H1 (cell line): ENCODE measurements at regions of chr10 and their contacts with region 1.

Region 1: DNA sequence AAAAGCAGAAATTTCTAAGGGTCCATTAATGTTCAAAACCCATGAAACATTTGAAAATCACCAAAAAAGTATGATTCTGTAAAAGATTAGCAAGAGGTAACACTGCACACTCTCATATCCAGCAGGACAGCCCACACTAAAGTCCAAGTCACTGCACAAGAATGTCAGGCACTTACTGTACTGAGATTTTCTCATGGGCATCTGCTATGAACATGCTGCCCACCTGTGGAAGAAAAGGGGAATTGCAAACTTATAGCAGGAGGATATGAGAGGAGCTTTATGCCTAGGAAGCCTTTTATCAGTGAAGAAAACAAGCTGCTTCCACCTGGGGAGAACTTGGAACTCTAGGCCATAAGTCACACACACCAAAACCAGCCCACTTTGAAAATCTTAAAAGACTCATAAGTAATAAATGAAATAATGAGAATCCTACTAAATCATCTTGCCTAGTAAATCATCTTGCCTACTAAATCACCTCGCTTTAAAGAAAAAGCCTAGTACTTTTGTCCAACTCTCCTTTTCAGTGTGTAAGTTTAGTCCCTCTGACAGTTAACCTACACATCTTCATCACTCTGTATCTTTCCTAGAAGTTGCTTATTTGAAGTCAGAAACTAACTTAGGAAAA is 46.1 kb downstream of the ARMH3 start:
- DNase-seq: peak in 1 of 2 experiments; percentile 17
- H3K4me3 ChIP-seq: no peak overlapping the region
- H3K27ac ChIP-seq: no peak overlapping the region
- H3K4me1 ChIP-seq: peaks cover 0 to 5% (median 2%) of the 10 kb centered on the region in 4 experiments; a peak in 3 of 7 replicates
- H3K27me3 ChIP-seq: no peaks in the 10 kb centered on the region
- CTCF ChIP-seq: peak in 2 of 3 experiments; percentile 95 to 99; a peak in 3 of 4 replicates
- EP300 ChIP-seq: no peak
- POLR2A ChIP-seq: no peak
- RAD21 ChIP-seq: peak; percentile 99

Region 2: DNA sequence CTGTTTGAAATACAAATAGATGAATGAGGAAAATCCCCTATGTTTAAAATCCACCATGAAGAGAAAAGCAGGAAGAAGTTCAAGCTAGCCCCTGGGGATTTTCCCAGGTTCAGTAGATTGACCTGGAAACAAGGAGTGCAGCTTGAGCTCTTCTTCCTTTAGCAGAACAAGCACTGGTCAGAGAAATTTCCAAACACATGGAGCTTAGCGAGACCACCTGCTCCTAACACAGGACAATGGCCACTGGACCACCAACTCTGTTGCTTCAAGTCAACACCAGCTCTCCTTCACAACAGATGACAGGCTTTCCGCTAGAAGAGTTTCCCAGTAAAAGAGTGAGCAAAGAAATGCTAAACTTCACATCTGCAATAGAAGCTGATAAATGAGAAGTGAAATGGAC is 305.6 kb before region 1 on chr10:
- CTCF ChIA-PET with region 1: no interaction called
- POLR2A ChIA-PET with region 1: no interaction called
- DNase-seq: no peak
- H3K4me3 ChIP-seq: no peak overlapping the region
- H3K27ac ChIP-seq: no peak overlapping the region
- H3K4me1 ChIP-seq: no peaks in the 10 kb centered on the region
- H3K27me3 ChIP-seq: no peaks in the 10 kb centered on the region
- CTCF ChIP-seq: no peak
- EP300 ChIP-seq: no peak
- POLR2A ChIP-seq: no peak
- RAD21 ChIP-seq: no peak

Region 3: GRCh38 chr10:101830322-101831168 is 179.4 kb before region 1 on chr10:
- CTCF ChIA-PET with region 1: interaction called, 18 read pairs
- POLR2A ChIA-PET with region 1: no interaction called
- DNase-seq: peak in 1 of 2 experiments; percentile 90
- H3K4me3 ChIP-seq: peak overlapping the region; percentile 44 to 66 (median 48)
- H3K27ac ChIP-seq: no peak overlapping the region
- H3K4me1 ChIP-seq: peaks cover 9 to 22% (median 17%) of the 10 kb centered on the region in 4 experiments
- H3K27me3 ChIP-seq: no peaks in the 10 kb centered on the region
- CTCF ChIP-seq: no peak
- EP300 ChIP-seq: no peak
- POLR2A ChIP-seq: no peak
- RAD21 ChIP-seq: no peak

Region 4: DNA sequence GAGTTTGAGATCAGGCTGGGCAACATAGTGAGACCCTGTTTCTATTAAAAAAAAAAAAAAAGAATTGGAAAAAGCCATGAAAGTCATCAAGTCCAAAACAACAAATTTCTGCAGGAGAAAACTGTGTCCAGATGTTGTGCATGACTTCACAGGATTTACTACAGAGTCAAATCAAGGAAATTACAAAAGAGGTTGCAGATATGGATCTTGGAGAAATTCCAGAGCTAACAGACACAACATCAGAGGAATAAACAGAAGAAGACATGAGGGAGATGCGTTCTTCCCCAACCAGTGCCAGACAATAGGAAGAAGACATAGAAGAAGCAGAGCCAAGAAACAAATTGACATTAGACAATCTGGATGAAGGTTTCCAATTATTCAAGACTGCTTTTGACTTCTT is 142.0 kb before region 1 on chr10:
- CTCF ChIA-PET with region 1: interaction called, 11 read pairs
- POLR2A ChIA-PET with region 1: no interaction called
- DNase-seq: no peak
- H3K4me3 ChIP-seq: no peak overlapping the region
- H3K27ac ChIP-seq: no peak overlapping the region
- H3K4me1 ChIP-seq: no peaks in the 10 kb centered on the region
- H3K27me3 ChIP-seq: no peaks in the 10 kb centered on the region
- CTCF ChIP-seq: no peak
- EP300 ChIP-seq: no peak
- POLR2A ChIP-seq: no peak
- RAD21 ChIP-seq: no peak

Region 5: GRCh38 chr10:101903827-101904550 is 105.9 kb before region 1 on chr10:
- CTCF ChIA-PET with region 1: interaction called, 20 read pairs
- POLR2A ChIA-PET with region 1: no interaction called
- DNase-seq: no peak
- H3K4me3 ChIP-seq: no peak overlapping the region
- H3K27ac ChIP-seq: no peak overlapping the region
- H3K4me1 ChIP-seq: peaks cover 6 to 28% (median 18%) of the 10 kb centered on the region in 4 experiments; a peak in 6 of 7 replicates
- H3K27me3 ChIP-seq: no peaks in the 10 kb centered on the region; a peak in 1 of 7 replicates
- CTCF ChIP-seq: no peak
- EP300 ChIP-seq: no peak
- POLR2A ChIP-seq: no peak
- RAD21 ChIP-seq: no peak

Region 6: GRCh38 chr10:101950213-101950612 is 59.7 kb before region 1 on chr10:
- CTCF ChIA-PET with region 1: no interaction called
- POLR2A ChIA-PET with region 1: no interaction called
- DNase-seq: no peak
- H3K4me3 ChIP-seq: no peak overlapping the region
- H3K27ac ChIP-seq: no peak overlapping the region
- H3K4me1 ChIP-seq: no peaks in the 10 kb centered on the region
- H3K27me3 ChIP-seq: no peaks in the 10 kb centered on the region
- CTCF ChIP-seq: no peak
- EP300 ChIP-seq: no peak
- POLR2A ChIP-seq: no peak
- RAD21 ChIP-seq: no peak

Region 7: GRCh38 chr10:102024799-102025198 is 14.9 kb after region 1 on chr10:
- CTCF ChIA-PET with region 1: interaction called, 38 read pairs
- POLR2A ChIA-PET with region 1: no interaction called
- DNase-seq: no peak
- H3K4me3 ChIP-seq: no peak overlapping the region
- H3K27ac ChIP-seq: no peak overlapping the region
- H3K4me1 ChIP-seq: no peaks in the 10 kb centered on the region
- H3K27me3 ChIP-seq: no peaks in the 10 kb centered on the region
- CTCF ChIP-seq: no peak
- EP300 ChIP-seq: no peak
- POLR2A ChIP-seq: no peak
- RAD21 ChIP-seq: no peak

Region 8: DNA sequence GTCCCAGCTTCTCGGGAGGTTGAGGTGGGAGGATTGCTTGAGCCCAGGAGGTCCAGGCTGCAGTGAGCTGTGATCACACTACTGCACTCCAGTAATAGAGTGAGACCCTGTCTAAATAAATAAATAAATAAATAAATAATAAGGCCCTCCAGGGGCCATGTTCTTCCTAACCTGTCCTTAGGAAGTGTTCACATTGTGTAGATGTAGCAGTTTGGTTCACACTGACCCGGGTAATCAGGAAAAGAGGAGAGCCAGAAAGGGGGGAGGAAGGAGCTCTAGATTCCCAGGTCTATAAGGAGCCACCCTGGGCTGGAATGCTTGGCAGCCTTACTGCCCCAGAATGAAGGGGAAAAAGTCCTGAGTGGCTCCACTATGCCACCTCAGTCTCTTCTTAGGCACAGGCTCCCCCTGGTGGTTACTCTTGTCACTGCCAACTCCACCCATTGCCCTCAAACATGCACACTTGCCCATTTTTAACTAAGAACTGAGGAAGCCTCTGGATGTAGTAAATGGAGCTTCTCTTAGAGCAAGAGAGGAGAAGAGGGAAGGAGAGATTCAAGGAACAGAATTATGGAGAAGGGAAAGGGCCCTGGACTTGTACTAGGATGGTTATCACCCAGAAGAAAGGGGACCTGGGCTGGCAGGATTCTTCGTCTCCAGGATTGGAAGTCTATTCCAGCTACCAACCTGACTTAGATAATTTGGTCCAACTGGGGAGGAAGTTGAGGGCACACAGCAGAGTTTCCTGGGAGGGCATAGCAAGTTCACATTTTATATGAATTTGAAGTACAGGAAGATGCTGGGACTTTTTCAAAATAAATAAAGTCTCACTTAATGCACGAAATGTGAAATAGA is 63.0 kb after region 1 on chr10:
- CTCF ChIA-PET with region 1: interaction called, 32 read pairs
- POLR2A ChIA-PET with region 1: interaction called, 4 read pairs
- DNase-seq: peak in 1 of 2 experiments; percentile 94
- H3K4me3 ChIP-seq: no peak overlapping the region
- H3K27ac ChIP-seq: no peak overlapping the region
- H3K4me1 ChIP-seq: 0 out of 7 replicates have a peak, but pooled peaks cover 0 to 2% (median 0%) of the 10 kb centered on the region in 4 experiments
- H3K27me3 ChIP-seq: no peaks in the 10 kb centered on the region; a peak in 1 of 7 replicates
- CTCF ChIP-seq: peak; percentile 89 to 95 (median 90)
- EP300 ChIP-seq: no peak
- POLR2A ChIP-seq: no peak
- RAD21 ChIP-seq: peak; percentile 86 to 89

Region 9: DNA sequence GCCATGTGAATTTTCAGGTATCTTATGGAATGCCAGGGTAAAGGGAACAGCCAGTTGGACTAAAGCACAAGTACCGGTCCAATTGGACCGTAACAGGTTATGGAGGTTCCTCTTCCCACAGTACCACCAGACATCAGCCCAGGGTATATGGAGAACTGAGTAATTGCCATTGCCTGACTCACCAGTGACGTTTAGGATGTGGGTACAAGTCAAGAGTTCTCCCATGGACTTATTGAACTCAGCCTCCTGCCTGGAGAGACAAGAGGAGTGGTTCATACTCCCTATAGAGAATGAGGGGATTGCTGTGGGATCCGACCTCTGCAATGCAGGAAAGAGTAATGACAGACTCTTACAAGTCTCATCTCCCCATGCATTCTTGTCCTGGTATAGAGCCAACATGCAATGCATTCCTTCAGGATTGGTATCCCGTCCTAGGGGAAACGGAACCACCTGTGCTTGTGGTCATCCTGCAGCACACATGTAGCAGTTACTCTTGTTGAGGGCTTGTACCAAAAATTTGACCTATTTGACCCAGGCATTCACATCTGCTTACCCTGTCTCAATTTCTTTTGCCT is 185.5 kb after region 1 on chr10:
- CTCF ChIA-PET with region 1: no interaction called
- POLR2A ChIA-PET with region 1: no interaction called
- DNase-seq: no peak
- H3K4me3 ChIP-seq: no peak overlapping the region
- H3K27ac ChIP-seq: no peak overlapping the region
- H3K4me1 ChIP-seq: no peaks in the 10 kb centered on the region
- H3K27me3 ChIP-seq: no peaks in the 10 kb centered on the region; a peak in 1 of 7 replicates
- CTCF ChIP-seq: no peak
- EP300 ChIP-seq: no peak
- POLR2A ChIP-seq: no peak
- RAD21 ChIP-seq: no peak

Region 10: DNA sequence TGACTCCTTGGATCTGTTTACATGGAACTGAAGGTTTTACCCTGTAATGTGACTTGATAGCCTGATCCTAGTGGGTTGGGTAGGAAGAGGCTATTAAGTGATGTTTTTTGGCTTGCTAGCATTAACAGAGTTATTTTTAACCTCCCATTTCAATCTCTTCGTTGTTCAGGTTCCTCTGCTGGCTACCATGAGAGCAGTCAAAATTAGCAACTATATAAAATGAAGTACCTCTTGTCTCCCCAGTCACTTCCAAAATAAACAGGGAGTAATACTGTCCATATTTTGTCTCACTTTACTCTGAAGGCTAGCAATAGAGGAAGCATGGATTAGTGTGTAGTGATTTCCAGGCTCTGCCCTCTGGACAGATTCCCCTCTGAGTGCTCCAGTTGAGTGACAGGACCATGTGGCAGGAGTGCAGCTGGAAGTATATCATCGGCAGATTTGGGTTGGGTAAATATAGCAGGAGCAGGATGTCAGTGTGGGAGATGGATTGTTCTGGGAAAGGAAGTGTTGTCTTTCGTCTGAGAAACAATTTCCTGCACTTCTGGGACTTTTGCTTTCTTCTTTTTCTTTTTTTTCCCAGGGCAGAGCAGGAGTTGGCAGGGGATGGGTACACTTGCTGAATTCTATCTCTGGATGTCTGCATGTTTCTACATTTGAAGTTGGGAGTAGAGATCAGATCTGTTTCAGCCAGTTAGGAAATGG is 270.6 kb after region 1 on chr10:
- CTCF ChIA-PET with region 1: no interaction called
- POLR2A ChIA-PET with region 1: no interaction called
- DNase-seq: no peak
- H3K4me3 ChIP-seq: no peak overlapping the region
- H3K27ac ChIP-seq: no peak overlapping the region
- H3K4me1 ChIP-seq: no peaks in the 10 kb centered on the region
- H3K27me3 ChIP-seq: no peaks in the 10 kb centered on the region
- CTCF ChIP-seq: no peak
- EP300 ChIP-seq: no peak
- POLR2A ChIP-seq: no peak
- RAD21 ChIP-seq: no peak